Heart left ventricle (tissue), 16 donors: ENCODE measurements at regions of chr6 and their contacts with region 1.

Region 1: GRCh38 chr6:113306552-113307145 is 550.5 kb upstream of the MARCKS start:
- DNase-seq: peak in 4 of 5 donors; percentile 25 to 63 (median 51)
- ATAC-seq: peak in 3 of 4 donors; percentile 60 to 92 (median 76)
- H3K4me3 ChIP-seq: no peak overlapping the region
- H3K27ac ChIP-seq: no peak overlapping the region
- H3K4me1 ChIP-seq: no peaks in the 10 kb centered on the region
- H3K27me3 ChIP-seq: no peaks in the 10 kb centered on the region
- CTCF ChIP-seq: peak in 11 of 12 donors; percentile 28 to 71 (median 61)
- POLR2A ChIP-seq: no peak

Region 2: DNA sequence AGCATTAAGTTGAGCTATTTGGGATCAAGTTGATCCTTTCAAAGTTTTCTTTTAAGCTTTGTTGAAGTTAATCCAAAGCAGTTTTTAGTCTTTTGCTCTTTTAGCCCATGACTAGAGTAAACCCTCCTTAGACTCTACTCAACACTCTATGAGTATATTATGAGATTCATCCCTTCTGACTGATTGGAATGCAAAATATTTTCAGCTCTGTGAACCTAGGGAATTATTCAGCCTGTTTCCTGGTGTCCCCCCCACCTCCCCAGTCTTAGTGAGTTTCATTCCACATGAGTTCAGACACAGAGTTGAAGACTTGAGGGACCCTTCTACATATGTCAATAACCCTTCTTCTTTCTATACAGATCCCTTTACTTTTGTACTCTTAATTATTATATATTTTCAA is 545.8 kb before region 1 on chr6:
- intact Hi-C with region 1: no loop called
- DNase-seq: no peak
- ATAC-seq: no peak
- H3K4me3 ChIP-seq: no peak overlapping the region
- H3K27ac ChIP-seq: no peak overlapping the region
- H3K4me1 ChIP-seq: no peaks in the 10 kb centered on the region
- H3K27me3 ChIP-seq: no peaks in the 10 kb centered on the region
- CTCF ChIP-seq: no peak
- POLR2A ChIP-seq: no peak

Region 3: DNA sequence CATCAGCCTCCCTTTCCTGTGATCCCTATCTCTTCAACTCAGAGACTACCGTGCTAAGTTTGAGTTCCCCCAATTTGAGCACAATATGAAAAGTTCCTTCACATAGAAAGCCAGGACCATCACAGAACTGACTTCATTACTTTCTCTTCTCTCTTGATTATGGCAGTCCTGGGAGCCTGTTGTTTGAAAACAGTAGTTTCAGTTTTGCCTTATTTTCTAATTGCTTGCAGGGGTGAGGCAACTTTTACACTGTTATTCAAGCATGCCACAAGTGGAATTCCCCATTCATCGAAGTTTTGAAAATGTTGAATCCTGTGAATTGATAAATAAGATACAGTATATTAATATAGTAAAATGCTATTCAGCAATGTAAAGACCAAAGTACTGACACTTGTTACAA is 19.3 kb before region 1 on chr6:
- intact Hi-C with region 1: loop called in 1 of 10 experiments (anchors 2 kb)
- DNase-seq: no peak
- ATAC-seq: no peak
- H3K4me3 ChIP-seq: no peak overlapping the region
- H3K27ac ChIP-seq: no peak overlapping the region
- H3K4me1 ChIP-seq: peaks cover 0 to 2% (median 0%) of the 10 kb centered on the region in 12 donors
- H3K27me3 ChIP-seq: no peaks in the 10 kb centered on the region
- CTCF ChIP-seq: no peak
- POLR2A ChIP-seq: no peak